ENCODE measurements at regions of chr15 and their contacts with region 1.

Region 1: GRCh38 chr15:51380999-51381795 is 39.7 kb downstream of the GLDN start:
- DNase-seq: peak; percentile 80
- CTCF ChIP-seq: peak; percentile 77

Region 2: DNA sequence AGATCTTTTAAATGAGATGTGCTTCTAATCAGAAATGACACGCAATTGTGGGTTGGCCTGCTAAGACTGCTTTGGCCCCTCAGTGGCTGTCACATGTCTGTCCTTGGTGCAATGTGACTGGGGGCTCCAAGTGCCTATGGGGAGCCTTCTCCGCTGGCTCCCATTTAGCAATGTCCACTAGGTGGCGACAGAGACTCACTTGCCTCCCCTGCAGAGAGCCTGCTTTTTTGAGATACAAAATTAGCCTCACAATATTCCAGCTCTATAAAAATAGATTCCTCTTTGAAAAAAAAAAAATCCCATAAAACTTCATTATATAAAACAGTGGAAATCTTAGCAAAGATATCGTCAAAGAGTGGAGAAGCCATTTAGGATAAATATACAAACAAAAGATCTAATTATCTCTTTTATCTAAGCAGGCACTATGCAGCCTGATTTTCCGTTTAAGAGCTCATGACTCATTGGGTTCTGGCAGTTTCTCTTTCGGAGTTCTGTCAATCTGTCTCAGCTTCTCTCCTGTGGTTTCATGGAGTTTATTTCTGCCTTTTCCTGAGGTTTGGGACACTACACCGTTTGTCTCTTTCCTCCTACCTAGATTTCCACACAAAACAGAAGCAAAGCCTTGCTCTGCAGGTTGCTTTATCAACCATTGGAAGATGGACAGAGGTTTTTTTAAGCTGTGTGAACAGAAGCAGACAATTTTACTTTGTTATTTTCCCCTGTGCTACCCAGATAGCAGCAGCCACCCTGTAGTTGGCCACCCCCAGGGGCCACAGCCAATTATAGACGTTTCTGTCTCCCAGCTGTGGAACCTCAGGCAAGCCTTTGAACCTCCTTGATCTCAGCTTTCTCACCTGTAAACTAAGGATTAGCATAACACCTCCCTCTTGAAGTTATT is 218.1 kb before region 1 on chr15:
- in situ Hi-C with region 1: loop called (anchors 10 kb)
- DNase-seq: peak; percentile 82
- CTCF ChIP-seq: peak; percentile 84

Region 3: GRCh38 chr15:51281368-51281967 is 99.7 kb before region 1 on chr15:
- in situ Hi-C with region 1: loop called (anchors 25 kb)
- DNase-seq: peak; percentile 69
- CTCF ChIP-seq: peak; percentile 69

Region 4: DNA sequence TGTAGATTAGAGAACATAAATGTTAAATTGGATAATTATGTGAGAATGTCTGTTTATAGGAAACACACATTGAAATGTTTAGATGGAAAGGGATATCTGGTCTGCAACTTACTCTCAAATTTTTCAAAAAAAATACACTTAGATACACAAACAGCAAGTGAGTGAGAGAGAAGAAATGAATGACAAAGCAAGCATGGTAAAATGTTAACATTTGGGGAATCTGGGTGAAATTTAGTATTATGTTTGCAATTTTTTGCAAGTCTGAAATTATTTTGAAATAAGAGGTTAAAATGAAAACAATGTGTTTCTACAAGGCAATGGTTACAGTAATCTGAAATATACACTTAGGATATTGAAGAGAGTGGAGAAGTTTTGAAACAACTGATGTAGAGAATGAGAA is 94.5 kb after region 1 on chr15:
- in situ Hi-C with region 1: no loop called
- DNase-seq: no peak
- CTCF ChIP-seq: no peak

Measured in GM13976 (cell line).